Activated CD8-positive, alpha-beta T cell treated with anti-CD3 and anti-CD28 coated beads for 36 hours (primary cell): ENCODE measurements at regions of chr2 and their contacts with region 1.

Region 1: DNA sequence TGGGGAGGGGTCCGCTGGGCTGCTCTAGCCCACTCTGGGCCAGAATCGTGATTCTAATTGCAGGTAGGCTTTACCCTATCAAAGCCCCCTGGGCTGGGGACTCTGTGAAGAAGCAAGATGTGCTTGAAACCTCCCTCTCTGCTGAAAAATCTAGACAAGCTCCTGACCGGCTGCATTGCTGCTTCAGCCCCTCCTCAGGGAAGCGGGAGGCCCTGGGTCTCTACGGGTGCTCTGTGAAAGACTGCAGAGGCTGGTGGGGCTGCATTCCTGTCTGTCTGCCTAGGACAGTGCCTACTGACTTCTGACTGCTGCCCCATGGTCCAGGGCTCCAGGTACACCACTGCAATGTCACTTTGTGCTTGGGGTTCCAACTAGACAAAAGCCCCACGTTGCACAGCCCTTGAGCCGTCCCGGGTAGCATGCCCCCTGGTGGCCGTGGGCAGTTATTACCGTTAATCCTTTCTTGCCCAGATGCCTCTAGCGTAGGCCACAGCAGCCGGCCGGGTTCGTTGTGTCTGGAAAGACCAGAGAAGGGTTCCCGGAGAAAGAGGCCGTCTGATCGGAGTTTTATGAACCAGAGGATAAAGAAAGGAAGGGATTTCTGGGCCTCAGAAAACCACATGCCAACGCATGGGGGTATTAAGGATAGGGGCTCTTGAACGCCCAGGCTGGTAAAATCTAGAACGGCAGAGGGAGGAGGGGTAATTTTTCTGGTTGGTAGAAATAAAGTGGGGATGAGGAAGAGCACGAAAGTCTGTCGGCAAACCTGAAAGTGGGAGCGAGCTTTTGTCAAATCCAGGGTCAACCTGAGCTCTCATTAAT is 15.9 kb upstream of the C1QL2 start:
- DNase-seq: peak; percentile 62
- ATAC-seq: peak; percentile 56
- H3K4me3 Mint-ChIP-seq: no peak overlapping the region
- H3K27ac Mint-ChIP-seq: no peak overlapping the region
- H3K4me1 Mint-ChIP-seq: no peaks in the 10 kb centered on the region
- H3K27me3 Mint-ChIP-seq: no peaks in the 10 kb centered on the region
- CTCF ChIP-seq: peak; percentile 83

Region 2: GRCh38 chr2:119011162-119011909 is 163.1 kb before region 1 on chr2:
- CTCF ChIA-PET with region 1: interaction called, 3 read pairs
- POLR2A ChIA-PET with region 1: no interaction called
- intact Hi-C with region 1: loop called (anchors 10 kb)
- DNase-seq: peak; percentile 30
- ATAC-seq: no peak
- H3K4me3 Mint-ChIP-seq: no peak overlapping the region
- H3K27ac Mint-ChIP-seq: no peak overlapping the region
- H3K4me1 Mint-ChIP-seq: no peaks in the 10 kb centered on the region
- H3K27me3 Mint-ChIP-seq: peaks cover 27% of the 10 kb centered on the region
- CTCF ChIP-seq: peak; percentile 23

Region 3: GRCh38 chr2:119119999-119120756 is 54.2 kb before region 1 on chr2:
- CTCF ChIA-PET with region 1: no interaction called
- POLR2A ChIA-PET with region 1: no interaction called
- intact Hi-C with region 1: no loop called
- DNase-seq: no peak
- ATAC-seq: no peak
- H3K4me3 Mint-ChIP-seq: no peak overlapping the region
- H3K27ac Mint-ChIP-seq: no peak overlapping the region
- H3K4me1 Mint-ChIP-seq: no peaks in the 10 kb centered on the region
- H3K27me3 Mint-ChIP-seq: peaks cover 2% of the 10 kb centered on the region
- CTCF ChIP-seq: no peak

Region 4: DNA sequence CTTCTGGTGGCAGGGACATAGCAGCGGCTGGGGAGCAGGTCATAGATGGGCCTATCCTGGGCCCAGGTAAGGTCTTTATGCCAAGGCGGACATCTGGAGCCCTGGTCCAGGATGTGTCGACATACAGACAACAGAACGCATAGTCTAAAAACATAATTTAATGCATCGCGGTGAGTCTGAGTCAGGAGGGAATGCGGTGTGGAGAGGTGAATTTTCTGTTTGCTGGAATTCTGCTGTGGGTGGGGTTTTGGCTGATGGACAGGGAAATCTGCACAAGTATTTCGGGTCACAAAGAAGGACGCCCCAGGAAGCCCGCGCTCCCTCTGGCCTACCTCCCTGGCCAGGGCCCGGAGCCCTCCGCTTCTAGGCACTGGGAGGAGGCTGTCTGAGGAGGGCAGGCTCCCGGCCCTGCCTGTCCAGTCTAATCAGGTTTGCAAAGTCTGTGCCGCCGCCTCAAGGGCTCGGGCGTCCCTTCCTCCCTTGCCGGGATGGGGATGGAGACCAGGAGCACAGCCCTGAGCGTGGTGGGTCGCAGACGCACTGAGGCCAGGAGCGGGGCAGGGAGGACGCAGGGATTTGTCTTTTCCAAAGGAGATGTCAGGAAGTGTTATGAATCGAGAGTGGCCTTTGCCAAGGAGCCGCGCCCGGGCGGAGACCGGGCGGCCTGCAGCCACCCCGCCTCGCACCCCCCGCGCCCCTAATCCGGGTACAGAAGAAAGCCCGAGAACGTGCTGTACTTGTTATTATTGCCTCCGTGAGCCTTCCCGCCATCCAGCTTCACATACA is 18.1 kb before region 1 on chr2:
- CTCF ChIA-PET with region 1: no interaction called
- POLR2A ChIA-PET with region 1: no interaction called
- intact Hi-C with region 1: no loop called
- DNase-seq: no peak
- ATAC-seq: no peak
- H3K4me3 Mint-ChIP-seq: no peak overlapping the region
- H3K27ac Mint-ChIP-seq: no peak overlapping the region
- H3K4me1 Mint-ChIP-seq: no peaks in the 10 kb centered on the region
- H3K27me3 Mint-ChIP-seq: peaks cover 49% of the 10 kb centered on the region
- CTCF ChIP-seq: no peak

Region 5: DNA sequence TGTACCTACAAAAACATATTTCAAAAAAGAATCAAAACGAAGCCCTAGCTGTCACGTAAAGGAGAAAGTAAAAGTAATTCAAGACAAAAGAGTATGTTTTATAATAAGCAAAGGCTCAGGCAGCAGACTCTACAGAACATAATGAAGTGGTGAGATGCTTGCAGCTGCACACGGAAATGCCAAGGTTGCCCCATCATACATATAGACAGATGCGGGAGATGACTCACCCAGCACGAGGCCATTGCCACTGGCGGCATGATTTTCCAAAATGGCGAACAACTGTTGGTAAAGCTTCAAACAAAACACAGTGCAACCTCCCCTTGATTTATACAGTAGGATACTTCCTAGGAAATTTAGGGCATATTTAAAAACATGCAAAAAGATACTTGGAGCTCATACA is 10.1 kb after region 1 on chr2:
- CTCF ChIA-PET with region 1: no interaction called
- POLR2A ChIA-PET with region 1: no interaction called
- intact Hi-C with region 1: no loop called
- DNase-seq: no peak
- ATAC-seq: no peak
- H3K4me3 Mint-ChIP-seq: no peak overlapping the region
- H3K27ac Mint-ChIP-seq: no peak overlapping the region
- H3K4me1 Mint-ChIP-seq: no peaks in the 10 kb centered on the region
- H3K27me3 Mint-ChIP-seq: peaks cover under 1% of the 10 kb centered on the region
- CTCF ChIP-seq: no peak